Heart right ventricle (tissue), 16 donors: ENCODE measurements at regions of chr5 and their contacts with region 1.

Region 1: DNA sequence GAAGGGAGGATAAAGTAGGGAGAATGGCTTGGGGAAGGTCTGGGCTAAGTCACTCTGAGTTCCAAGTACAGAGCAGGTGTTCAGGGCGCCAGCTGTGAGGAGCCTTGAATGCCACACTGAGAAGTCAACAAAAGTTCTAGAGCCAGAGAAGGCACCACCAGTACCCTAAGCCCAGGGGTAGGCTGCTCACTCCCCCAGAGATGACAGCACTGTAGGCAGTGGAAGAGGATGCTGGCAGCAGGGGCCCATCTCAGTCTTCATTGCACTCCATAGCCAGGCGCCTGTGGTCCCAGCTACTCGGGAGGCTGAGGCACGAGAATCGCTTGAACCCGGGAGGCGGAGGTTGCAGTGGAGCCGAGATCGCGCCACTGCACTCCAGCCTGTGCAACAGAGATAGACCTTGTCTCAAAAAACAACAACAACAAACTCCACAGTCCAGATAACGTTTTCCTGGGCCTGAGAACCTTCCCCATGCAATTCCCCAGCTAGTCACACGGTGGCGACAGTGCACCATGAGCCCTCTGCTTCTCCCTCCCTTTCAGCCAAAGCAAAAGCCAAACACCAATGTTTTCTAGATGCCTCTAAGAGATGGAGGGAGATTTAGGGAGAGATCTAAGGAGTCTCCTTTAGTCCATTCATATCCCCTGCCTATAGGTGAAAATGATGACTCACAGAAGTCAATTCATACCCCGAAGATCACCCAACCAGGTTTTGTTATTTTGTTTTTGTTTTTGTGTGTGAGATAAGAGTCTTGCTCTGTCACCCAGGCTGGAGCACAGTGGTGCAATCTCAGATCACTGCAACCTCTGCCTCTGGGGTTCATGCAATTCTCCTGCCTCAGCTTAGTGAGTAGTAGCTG is 19.8 kb upstream of the NSD1 start:
- DNase-seq: peak; percentile 71 to 79
- ATAC-seq: peak; percentile 16 to 69 (median 52)
- H3K4me3 ChIP-seq: peak overlapping the region in 5 of 10 donors; percentile 27 to 36 (median 31)
- H3K27ac ChIP-seq: peak overlapping the region in 8 of 10 donors; percentile 58 to 81 (median 64)
- H3K4me1 ChIP-seq: peaks cover 0 to 40% (median 16%) of the 10 kb centered on the region in 9 donors
- H3K27me3 ChIP-seq: no peaks in the 10 kb centered on the region
- CTCF ChIP-seq: peak; percentile 95 to 100 (median 99)

Region 2: GRCh38 chr5:176660860-176661641 is 452.7 kb before region 1 on chr5:
- intact Hi-C with region 1: loop called (anchors 2 to 10 kb)
- DNase-seq: peak; percentile 71 to 77
- ATAC-seq: peak; percentile 65 to 87 (median 82)
- H3K4me3 ChIP-seq: no peak overlapping the region
- H3K27ac ChIP-seq: no peak overlapping the region
- H3K4me1 ChIP-seq: peaks cover 0 to 28% (median 14%) of the 10 kb centered on the region in 9 donors
- H3K27me3 ChIP-seq: peaks cover 0 to 44% (median 33%) of the 10 kb centered on the region in 7 donors
- CTCF ChIP-seq: peak; percentile 92 to 99 (median 98)

Region 3: DNA sequence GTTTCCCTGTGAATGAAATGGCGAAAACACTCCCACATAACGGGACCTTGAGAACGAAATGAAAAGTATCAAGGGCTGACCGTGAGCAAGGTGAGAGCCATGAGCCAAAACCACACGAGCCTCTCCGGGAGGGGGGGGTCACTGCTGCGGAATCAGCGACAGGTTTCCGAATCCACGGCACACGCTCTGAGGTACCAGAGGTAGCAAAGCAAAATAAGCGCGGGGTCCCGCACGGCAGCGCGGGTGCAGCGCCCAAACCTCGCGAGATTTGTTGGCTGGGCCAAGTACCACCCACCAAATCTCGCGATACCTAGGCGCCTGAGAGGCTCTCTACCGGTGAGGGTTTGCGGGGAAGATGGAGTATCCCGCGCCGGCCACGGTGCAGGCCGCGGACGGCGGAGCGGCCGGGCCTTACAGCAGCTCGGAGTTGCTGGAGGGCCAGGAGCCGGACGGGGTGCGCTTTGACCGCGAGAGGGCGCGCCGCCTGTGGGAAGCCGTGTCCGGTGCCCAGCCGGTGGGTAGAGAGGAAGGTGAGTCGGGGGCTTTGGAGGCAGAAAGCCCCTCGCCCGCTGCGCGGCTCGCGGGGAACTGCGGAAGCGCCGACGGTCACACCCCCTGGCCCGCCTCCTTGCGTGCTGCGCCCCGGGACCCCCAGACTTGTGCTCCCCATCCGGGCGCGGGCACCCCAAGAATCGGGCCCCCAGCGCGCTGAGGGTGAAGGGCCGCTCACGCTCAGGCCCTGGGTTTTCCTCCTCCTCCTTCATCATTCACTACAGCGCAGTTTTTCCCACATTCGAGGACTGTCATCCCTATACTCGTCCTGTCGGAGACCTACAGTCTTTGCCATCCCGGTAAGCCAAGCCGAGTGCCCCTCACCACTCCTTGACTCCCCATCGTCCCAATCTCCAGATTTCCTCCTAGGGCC is 91.1 kb before region 1 on chr5 and contains the start of gene ZNF346:
- intact Hi-C with region 1: no loop called
- DNase-seq: peak; percentile 90 to 92
- ATAC-seq: peak; percentile 95 to 98 (median 96)
- H3K4me3 ChIP-seq: peak within 1 kb of the TSS; percentile 68 to 98 (median 92)
- H3K27ac ChIP-seq: peak within 1 kb of the TSS; percentile 59 to 92 (median 86)
- H3K4me1 ChIP-seq: peaks cover 0 to 24% (median 18%) of the 10 kb centered on the region in 9 donors
- H3K27me3 ChIP-seq: no peaks in the 10 kb centered on the region
- CTCF ChIP-seq: peak; percentile 10 to 86 (median 61)
- total RNA-seq, gene ZNF346: 7.2 to 11.0 (median 8.7) TPM

Region 4: DNA sequence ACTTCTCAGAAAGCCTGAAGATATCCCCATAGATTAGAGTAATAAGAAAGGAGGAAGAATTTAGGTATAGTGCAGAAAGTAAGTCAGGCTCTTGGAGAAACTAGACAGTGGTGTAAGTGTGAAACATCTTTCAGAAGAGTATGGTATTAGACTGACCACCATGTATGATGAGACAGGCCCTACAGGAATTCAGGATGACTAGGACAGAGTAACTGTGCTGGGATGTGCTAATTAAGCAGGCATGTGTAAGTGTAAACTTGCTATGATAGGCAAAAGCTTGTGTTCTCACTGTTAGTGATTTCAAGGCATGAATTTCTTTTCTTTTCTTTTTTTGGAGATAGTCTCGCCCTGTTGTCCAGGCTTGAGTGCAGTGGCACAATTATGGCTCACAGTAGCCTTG is 119.0 kb after region 1 on chr5:
- intact Hi-C with region 1: loop called in 2 of 10 experiments (anchors 10 kb)
- DNase-seq: no peak
- ATAC-seq: peak in 3 of 8 donors; percentile 31 to 49 (median 46)
- H3K4me3 ChIP-seq: no peak overlapping the region
- H3K27ac ChIP-seq: peak overlapping the region in 1 of 10 donors; percentile 33
- H3K4me1 ChIP-seq: peaks cover 0 to 42% (median 23%) of the 10 kb centered on the region in 9 donors
- H3K27me3 ChIP-seq: no peaks in the 10 kb centered on the region
- CTCF ChIP-seq: no peak

Region 5: GRCh38 chr5:177276886-177277285 is 163.1 kb after region 1 on chr5:
- intact Hi-C with region 1: loop called in 1 of 10 experiments (anchors 10 kb)
- DNase-seq: no peak
- ATAC-seq: no peak
- H3K4me3 ChIP-seq: no peak overlapping the region
- H3K27ac ChIP-seq: peak overlapping the region in 3 of 10 donors; percentile 5 to 28 (median 21)
- H3K4me1 ChIP-seq: peaks cover 0 to 6% (median 0%) of the 10 kb centered on the region in 9 donors
- H3K27me3 ChIP-seq: no peaks in the 10 kb centered on the region
- CTCF ChIP-seq: no peak

Region 6: DNA sequence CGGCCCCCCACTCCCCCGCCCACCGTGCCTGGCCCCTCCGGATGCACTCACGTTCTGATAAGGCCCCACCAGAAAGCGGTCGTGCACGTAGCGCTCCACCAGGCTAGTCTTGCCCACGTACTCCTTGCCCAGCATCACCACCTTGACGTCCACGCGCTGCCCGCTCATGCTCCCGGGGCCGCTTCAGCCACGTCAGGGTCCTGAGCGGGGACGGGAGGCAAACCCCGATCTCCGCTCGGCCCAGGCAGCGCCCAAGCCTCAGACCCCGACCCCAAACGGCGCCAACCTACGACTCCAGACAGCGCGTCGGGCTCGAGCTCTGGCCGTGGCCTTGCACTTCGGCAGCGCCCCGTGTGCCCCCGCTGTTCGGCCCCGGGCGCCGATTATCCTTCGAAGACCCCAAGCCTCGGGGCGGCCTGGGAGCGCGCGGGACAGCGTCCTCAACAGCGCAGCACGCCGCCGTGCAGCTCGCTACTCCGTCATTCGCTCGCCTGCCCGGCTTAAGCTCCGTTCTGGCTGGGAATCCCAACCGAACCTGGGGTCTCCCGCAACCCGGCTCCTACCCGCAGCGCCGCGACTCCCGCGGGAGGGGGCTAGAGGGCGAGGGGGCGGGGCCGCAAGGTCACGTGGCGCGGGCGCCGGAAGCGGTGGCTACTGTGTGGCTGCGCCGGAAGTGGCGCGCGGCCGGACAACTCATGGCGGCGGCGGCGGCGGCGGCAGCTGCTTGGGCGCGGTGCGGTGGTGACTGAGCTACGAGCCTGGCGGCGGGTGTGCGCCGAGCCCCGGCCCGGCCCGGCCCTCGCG is 189.5 kb after region 1 on chr5 and contains the starts of genes PRELID1 and RAB24:
- intact Hi-C with region 1: loop called in 7 of 10 experiments (anchors 5 to 10 kb)
- DNase-seq: peak; percentile 88 to 91
- ATAC-seq: peak; percentile 82 to 93 (median 86)
- H3K4me3 ChIP-seq: peak within 1 kb of the TSS; percentile 67 to 100 (median 94)
- H3K27ac ChIP-seq: peak within 1 kb of the TSS; percentile 72 to 97 (median 89)
- H3K4me1 ChIP-seq: peaks cover 20 to 85% (median 52%) of the 10 kb centered on the region in 9 donors
- H3K27me3 ChIP-seq: no peaks in the 10 kb centered on the region
- CTCF ChIP-seq: peak in 8 of 9 donors; percentile 12 to 66 (median 35)
- total RNA-seq, gene PRELID1: 32.3 to 69.8 (median 36.2) TPM
- total RNA-seq, gene RAB24: 14.7 to 22.1 (median 19.3) TPM

Region 7: DNA sequence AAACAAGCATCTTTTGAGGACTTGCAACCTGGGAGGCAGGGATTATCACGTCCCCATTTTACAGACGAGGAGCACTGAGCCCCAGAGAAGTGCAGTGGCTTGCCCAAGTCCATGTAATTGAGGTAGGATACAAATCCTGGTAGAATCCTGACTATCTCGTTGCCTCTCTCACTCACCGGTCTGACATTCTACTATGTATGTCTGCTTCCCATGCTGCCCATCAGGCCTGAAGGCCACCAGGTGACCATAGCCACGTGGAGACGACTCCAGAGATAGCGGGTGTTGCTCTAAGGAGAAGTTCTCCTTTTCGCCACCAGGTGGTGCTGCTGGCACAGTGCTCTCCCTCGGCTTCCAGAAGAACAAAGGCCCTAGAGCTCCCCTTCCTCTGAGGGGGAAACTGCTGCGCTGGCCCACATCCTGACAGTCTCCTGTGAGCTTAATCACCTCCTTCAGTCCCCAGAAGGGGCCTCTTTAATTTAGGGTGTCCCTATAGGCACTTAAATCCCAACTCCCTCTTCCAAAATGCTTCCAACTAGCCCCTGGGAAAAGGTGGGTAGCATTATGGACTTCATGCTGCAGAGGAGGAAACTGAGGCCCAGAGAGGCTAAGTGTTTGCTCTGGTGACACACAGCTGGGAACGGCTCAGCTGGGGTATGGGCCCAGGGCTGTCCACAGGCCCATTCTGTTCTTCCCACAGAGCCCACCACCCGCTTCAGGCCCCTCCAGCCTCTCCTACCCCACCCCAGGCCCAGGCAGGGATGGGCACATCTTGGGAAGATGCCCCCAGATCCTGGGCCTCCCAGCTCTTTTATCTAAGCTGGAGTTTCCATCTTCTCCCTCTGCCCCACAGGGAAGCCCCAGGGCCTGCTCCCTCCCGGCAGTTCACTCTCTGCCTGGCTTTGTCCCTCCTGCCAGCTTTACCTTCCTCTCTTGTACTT is 276.8 kb after region 1 on chr5:
- intact Hi-C with region 1: loop called in 1 of 10 experiments (anchors 10 kb)
- DNase-seq: peak; percentile 69 to 82
- ATAC-seq: peak; percentile 75 to 94 (median 86)
- H3K4me3 ChIP-seq: no peak overlapping the region
- H3K27ac ChIP-seq: peak overlapping the region in 1 of 10 donors; percentile 61
- H3K4me1 ChIP-seq: peaks cover 0 to 30% (median 0%) of the 10 kb centered on the region in 9 donors
- H3K27me3 ChIP-seq: peaks cover 0 to 40% (median 11%) of the 10 kb centered on the region in 7 donors
- CTCF ChIP-seq: peak; percentile 91 to 99 (median 99)